ENCODE measurements at regions of chr2 and their contacts with region 1.

Region 1: DNA sequence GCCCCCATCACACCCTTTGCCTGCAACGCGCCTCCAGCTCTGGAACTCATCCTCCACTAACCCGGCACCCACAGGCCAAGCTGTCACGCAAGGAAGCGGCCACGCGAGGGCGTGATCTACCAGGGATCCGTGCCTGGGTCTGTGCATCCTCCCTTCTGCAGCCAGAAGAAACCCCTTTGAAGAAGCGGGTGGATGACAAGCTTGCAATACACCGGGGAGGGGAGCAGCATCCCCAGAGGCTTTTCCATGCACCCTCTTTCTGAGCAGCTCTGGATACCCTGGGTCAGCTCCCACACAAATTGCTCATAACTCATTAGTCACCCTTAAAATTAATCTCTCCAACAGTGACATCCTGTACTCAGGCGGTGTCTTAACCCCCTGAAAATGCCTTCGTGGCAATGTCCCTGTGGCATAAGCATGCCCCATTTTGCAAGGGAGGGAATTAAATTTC is 47.6 kb downstream of the PDCL3 start:
- DNase-seq: peak; percentile 82
- ATAC-seq: peak; percentile 78
- H3K4me3 ChIP-seq: no peak overlapping the region
- H3K27ac ChIP-seq: no peak overlapping the region
- H3K4me1 ChIP-seq: peaks cover 9% of the 10 kb centered on the region; the same call in 1 of the 2 replicates
- H3K27me3 ChIP-seq: no peaks in the 10 kb centered on the region
- CTCF ChIP-seq: peak; percentile 90

Region 2: GRCh38 chr2:100653449-100654035 is 43.1 kb after region 1 on chr2:
- CTCF ChIA-PET with region 1: no interaction called
- POLR2A ChIA-PET with region 1: no interaction called
- intact Hi-C with region 1: no loop called
- DNase-seq: no peak
- ATAC-seq: no peak
- H3K4me3 ChIP-seq: no peak overlapping the region
- H3K27ac ChIP-seq: no peak overlapping the region
- H3K4me1 ChIP-seq: 0 out of 2 replicates have a peak, but pooled peaks cover 7% of the 10 kb centered on the region
- H3K27me3 ChIP-seq: no peaks in the 10 kb centered on the region
- CTCF ChIP-seq: no peak

Region 3: DNA sequence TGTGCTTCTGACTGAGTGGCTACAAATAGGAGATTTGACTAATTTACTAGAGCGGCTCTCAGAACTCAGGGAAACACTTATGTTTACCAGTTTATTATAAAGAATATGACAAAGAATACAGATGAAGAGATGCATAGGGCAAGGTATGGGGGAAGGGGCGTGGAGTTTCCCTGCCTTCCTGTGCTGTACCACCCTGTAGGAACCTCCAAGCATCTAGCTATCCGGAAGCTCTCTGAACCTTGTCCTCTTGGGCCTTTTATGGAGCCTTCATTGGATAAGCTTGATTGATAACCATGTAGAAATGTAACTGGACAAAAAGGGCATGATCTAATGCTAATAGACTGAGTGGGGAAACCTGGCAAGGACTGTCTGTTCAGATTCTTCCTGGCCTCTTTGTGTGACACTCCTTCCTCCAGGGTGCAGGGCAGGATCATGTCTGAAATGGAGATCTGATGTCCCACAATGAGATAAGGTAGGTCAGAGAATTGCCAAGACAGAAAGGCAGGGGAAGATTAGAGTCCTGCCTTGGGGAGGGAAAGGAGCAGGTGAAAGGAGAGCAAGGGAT is 107.7 kb after region 1 on chr2:
- CTCF ChIA-PET with region 1: no interaction called
- POLR2A ChIA-PET with region 1: no interaction called
- intact Hi-C with region 1: loop called (anchors 5 kb)
- DNase-seq: no peak
- ATAC-seq: no peak
- H3K4me3 ChIP-seq: no peak overlapping the region
- H3K27ac ChIP-seq: no peak overlapping the region
- H3K4me1 ChIP-seq: 0 out of 2 replicates have a peak, but pooled peaks cover 4% of the 10 kb centered on the region
- H3K27me3 ChIP-seq: no peaks in the 10 kb centered on the region
- CTCF ChIP-seq: no peak

Region 4: GRCh38 chr2:100793982-100794381 is 183.6 kb after region 1 on chr2:
- CTCF ChIA-PET with region 1: no interaction called
- POLR2A ChIA-PET with region 1: no interaction called
- intact Hi-C with region 1: no loop called
- DNase-seq: no peak
- ATAC-seq: no peak
- H3K4me3 ChIP-seq: no peak overlapping the region
- H3K27ac ChIP-seq: no peak overlapping the region
- H3K4me1 ChIP-seq: no peaks in the 10 kb centered on the region; the same call in 1 of the 2 replicates
- H3K27me3 ChIP-seq: no peaks in the 10 kb centered on the region
- CTCF ChIP-seq: no peak

Region 5: DNA sequence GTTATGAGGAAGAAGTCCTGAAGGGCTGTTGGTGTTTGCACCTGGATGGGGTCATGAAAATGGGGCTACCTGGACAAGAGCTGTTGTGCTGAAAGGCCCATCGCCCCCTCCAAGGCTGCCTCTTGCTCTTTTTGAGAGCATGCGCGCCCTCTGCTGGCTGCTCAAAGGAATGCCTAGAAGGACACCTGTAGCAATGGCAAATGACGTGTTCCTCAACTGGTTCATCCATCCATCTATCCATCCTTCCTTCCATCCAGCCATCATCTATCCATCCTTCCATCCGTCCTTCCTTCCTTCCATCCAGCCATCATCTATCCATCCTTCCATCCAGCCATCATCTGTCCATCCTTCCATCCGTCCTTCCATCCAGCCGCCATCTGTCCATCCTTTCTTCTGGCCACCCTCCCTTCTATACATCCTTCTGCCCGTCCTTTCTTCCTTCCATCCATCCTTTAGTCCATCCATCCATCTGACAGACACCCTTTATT is 374.5 kb after region 1 on chr2:
- CTCF ChIA-PET with region 1: no interaction called
- POLR2A ChIA-PET with region 1: no interaction called
- intact Hi-C with region 1: loop called (anchors 2 kb)
- DNase-seq: peak; percentile 79
- ATAC-seq: peak; percentile 61
- H3K4me3 ChIP-seq: no peak overlapping the region
- H3K27ac ChIP-seq: no peak overlapping the region
- H3K4me1 ChIP-seq: peaks cover 5% of the 10 kb centered on the region; the same call in 1 of the 2 replicates
- H3K27me3 ChIP-seq: no peaks in the 10 kb centered on the region
- CTCF ChIP-seq: peak; percentile 95